CD4-positive, alpha-beta T cell (primary cell): ENCODE measurements at regions of chr10 and their contacts with region 1.

Region 1: GRCh38 chr10:43453266-43453831 is 16.4 kb downstream of the ZNF487 start:
- DNase-seq: peak in 1 of 14 experiments; percentile 12
- ATAC-seq: no peak
- H3K4me3 ChIP-seq: no peak overlapping the region
- H3K4me3 Mint-ChIP-seq: peak overlapping the region; percentile 88
- H3K27ac ChIP-seq: peak overlapping the region; percentile 64 to 75
- H3K27ac Mint-ChIP-seq: peak overlapping the region; percentile 97
- H3K4me1 ChIP-seq: peaks cover 61% of the 10 kb centered on the region
- H3K4me1 Mint-ChIP-seq: peaks cover 59% of the 10 kb centered on the region
- H3K27me3 ChIP-seq: no peaks in the 10 kb centered on the region
- H3K27me3 Mint-ChIP-seq: no peaks in the 10 kb centered on the region
- CTCF ChIP-seq: no peak

Region 2: GRCh38 chr10:43340619-43341018 is 112.7 kb before region 1 on chr10:
- CTCF ChIA-PET with region 1: no interaction called
- POLR2A ChIA-PET with region 1: no interaction called
- intact Hi-C with region 1: no loop called
- DNase-seq: no peak
- ATAC-seq: no peak
- H3K4me3 ChIP-seq: no peak overlapping the region
- H3K4me3 Mint-ChIP-seq: no peak overlapping the region
- H3K27ac ChIP-seq: no peak overlapping the region
- H3K27ac Mint-ChIP-seq: no peak overlapping the region
- H3K4me1 ChIP-seq: peaks cover 15% of the 10 kb centered on the region
- H3K4me1 Mint-ChIP-seq: no peaks in the 10 kb centered on the region
- H3K27me3 ChIP-seq: peaks cover 0 to 5% of the 10 kb centered on the region in 2 experiments
- H3K27me3 Mint-ChIP-seq: peaks cover 8% of the 10 kb centered on the region
- CTCF ChIP-seq: no peak

Region 3: GRCh38 chr10:43427166-43427825 is 26.1 kb before region 1 on chr10:
- CTCF ChIA-PET with region 1: no interaction called
- POLR2A ChIA-PET with region 1: interaction called, 10 read pairs
- intact Hi-C with region 1: no loop called
- DNase-seq: peak in 12 of 14 experiments; percentile 22 to 63 (median 44)
- ATAC-seq: peak; percentile 95
- H3K4me3 ChIP-seq: peak overlapping the region; percentile 9
- H3K4me3 Mint-ChIP-seq: peak overlapping the region; percentile 76
- H3K27ac ChIP-seq: no peak overlapping the region
- H3K27ac Mint-ChIP-seq: peak overlapping the region; percentile 89
- H3K4me1 ChIP-seq: peaks cover 21% of the 10 kb centered on the region
- H3K4me1 Mint-ChIP-seq: peaks cover 21% of the 10 kb centered on the region
- H3K27me3 ChIP-seq: no peaks in the 10 kb centered on the region
- H3K27me3 Mint-ChIP-seq: no peaks in the 10 kb centered on the region
- CTCF ChIP-seq: no peak